ENCODE measurements at regions of chr12 and their contacts with region 1.

Region 1: DNA sequence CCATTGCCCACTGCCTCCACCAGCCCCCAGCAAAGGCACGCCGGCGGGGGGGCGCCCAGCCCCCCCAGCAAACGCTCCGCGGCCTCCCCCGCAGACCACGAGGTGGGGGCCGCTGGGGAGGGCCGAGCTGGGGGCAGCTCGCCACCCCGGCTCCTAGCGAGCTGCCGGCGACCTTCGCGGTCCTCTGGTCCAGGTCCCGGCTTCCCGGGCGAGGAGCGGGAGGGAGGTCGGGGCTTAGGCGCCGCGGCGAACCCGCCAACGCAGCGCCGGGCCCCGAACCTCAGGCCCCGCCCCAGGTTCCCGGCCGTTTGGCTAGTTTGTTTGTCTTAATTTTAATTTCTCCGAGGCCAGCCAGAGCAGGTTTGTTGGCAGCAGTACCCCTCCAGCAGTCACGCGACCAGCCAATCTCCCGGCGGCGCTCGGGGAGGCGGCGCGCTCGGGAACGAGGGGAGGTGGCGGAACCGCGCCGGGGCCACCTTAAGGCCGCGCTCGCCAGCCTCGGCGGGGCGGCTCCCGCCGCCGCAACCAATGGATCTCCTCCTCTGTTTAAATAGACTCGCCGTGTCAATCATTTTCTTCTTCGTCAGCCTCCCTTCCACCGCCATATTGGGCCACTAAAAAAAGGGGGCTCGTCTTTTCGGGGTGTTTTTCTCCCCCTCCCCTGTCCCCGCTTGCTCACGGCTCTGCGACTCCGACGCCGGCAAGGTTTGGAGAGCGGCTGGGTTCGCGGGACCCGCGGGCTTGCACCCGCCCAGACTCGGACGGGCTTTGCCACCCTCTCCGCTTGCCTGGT is at the start of gene CDKN1B:
- DNase-seq: peak; percentile 88
- ATAC-seq: peak; percentile 55
- H3K4me3 Mint-ChIP-seq: peak within 1 kb of the TSS; percentile 96
- H3K27ac Mint-ChIP-seq: peak within 1 kb of the TSS; percentile 98
- H3K4me1 Mint-ChIP-seq: peaks cover 41% of the 10 kb centered on the region
- H3K27me3 Mint-ChIP-seq: no peaks in the 10 kb centered on the region
- total RNA-seq, gene CDKN1B: 135 to 136 TPM

Region 2: DNA sequence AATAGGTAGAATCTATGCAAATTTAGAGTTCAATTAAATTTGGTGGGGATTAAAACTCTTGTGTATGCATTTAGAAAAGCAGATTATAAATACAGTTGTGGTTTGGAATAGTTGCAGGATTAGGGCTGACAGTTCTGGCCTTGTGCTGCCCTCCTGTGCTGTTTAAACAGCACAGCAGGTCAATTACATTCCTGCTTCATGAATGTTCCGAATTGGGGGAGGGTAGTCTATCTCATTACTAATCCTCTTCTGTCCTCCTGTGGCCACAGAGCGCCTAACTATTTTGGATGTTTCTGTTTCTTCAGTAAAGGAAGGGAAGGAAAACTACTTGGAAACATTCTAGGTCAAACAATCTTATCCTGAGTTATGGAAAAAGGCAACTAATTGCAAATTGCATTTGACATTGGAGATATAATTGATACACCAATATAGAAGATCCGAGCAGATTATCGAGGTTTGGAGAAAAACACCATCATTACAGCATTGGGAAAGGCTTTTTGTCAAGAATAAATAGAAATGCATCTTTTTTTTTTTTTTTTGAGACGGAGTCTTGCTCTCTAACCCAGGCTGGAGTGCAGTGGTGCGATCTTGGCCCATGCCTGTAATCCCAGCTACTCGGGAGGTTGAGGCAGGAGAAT is 12.3 kb before region 1 on chr12:
- POLR2A ChIA-PET with region 1: interaction called, 304 read pairs
- DNase-seq: no peak
- ATAC-seq: peak; percentile 65
- H3K4me3 Mint-ChIP-seq: peak overlapping the region; percentile 14
- H3K27ac Mint-ChIP-seq: no peak overlapping the region
- H3K4me1 Mint-ChIP-seq: peaks cover 19% of the 10 kb centered on the region
- H3K27me3 Mint-ChIP-seq: no peaks in the 10 kb centered on the region